ENCODE measurements at regions of chr1 and their contacts with region 1.

Region 1: DNA sequence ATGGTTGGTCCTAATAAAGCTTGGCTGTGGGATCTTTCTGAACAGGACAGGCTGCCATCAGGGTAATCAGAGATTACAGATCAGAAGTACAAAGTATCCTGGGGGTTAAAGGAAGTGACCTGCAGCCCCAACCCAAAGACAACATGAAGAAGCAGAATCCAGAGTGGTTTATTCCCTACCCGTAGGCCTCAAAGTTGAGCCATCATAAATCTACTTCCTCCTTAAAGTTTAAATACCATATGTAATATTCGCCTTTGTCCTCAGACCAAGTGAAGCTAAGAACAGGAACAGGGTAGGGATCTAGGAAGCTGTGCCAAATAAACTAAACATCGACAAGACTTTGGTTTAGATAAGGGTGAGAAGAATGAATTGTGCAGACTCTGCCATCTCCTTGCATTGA is 15.9 kb upstream of the DHX9 start:
- DNase-seq: no peak
- H3K4me3 Mint-ChIP-seq: no peak overlapping the region
- H3K27ac Mint-ChIP-seq: no peak overlapping the region
- H3K4me1 Mint-ChIP-seq: no peaks in the 10 kb centered on the region
- H3K27me3 Mint-ChIP-seq: no peaks in the 10 kb centered on the region
- CTCF ChIP-seq: no peak

Region 2: DNA sequence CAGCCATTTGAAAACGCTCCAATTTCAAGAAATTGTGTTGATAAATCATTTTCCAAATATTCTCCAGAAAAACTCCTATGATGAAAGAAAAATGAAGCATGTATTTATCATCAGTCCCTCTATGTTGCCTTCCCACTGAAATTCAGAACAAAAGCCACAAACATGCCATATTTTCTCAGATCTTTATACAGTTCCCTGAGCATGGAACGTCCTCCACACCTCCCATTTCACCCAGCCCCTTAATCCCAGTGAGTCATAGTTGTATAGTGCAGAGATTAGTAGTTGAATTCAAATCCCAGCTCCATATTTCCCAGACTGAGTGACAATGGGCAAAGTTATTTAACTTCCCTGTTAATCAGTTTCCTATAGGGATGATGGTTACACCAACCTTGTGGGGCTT is 54.3 kb before region 1 on chr1:
- CTCF ChIA-PET with region 1: no interaction called
- POLR2A ChIA-PET with region 1: no interaction called
- intact Hi-C with region 1: no loop called
- DNase-seq: peak; percentile 63
- H3K4me3 Mint-ChIP-seq: no peak overlapping the region
- H3K27ac Mint-ChIP-seq: no peak overlapping the region
- H3K4me1 Mint-ChIP-seq: peaks cover 10% of the 10 kb centered on the region
- H3K27me3 Mint-ChIP-seq: no peaks in the 10 kb centered on the region
- CTCF ChIP-seq: no peak

Region 3: DNA sequence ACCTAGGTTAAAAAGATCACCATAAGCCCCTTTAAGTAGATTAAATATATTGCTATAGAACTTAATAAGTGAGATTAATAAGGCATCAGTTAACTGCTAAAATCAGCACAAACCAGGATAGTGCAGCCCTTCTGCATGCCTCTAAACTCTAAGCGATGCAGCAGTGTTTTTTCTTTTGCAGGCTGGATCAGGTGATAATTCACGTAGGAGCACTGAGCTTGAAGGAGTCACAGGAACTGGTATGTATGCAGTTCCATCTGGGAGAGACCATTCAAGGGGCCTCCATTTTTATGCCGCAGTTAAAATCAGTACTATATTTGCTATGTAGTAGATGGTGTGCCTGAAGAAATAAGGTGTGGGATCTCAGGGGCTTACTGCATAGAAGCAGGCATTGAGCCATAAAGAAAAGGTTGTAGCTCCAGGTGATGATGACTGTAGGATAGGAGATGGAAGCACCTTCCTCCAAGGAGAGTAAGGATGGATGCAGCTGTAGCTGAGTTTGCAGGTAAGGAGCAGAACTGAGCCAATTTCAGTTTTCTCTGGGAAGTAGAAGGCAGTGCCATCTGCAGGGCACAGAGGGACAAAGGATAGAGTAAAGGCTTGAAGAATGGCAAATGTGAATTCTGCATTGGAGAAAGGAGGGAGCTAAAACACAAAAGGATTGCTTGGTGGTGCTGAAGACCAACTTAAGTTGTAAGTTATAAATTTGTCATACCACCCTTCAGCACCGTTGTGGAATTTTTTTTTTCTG is 11.1 kb before region 1 on chr1:
- CTCF ChIA-PET with region 1: interaction called, 10 read pairs
- POLR2A ChIA-PET with region 1: interaction called, 4 read pairs
- intact Hi-C with region 1: no loop called
- DNase-seq: peak; percentile 19
- H3K4me3 Mint-ChIP-seq: no peak overlapping the region
- H3K27ac Mint-ChIP-seq: no peak overlapping the region
- H3K4me1 Mint-ChIP-seq: peaks cover 6% of the 10 kb centered on the region
- H3K27me3 Mint-ChIP-seq: no peaks in the 10 kb centered on the region
- CTCF ChIP-seq: no peak

Region 4: GRCh38 chr1:182974506-182975191 is 151.4 kb after region 1 on chr1:
- CTCF ChIA-PET with region 1: no interaction called
- POLR2A ChIA-PET with region 1: no interaction called
- intact Hi-C with region 1: no loop called
- DNase-seq: no peak
- H3K4me3 Mint-ChIP-seq: no peak overlapping the region
- H3K27ac Mint-ChIP-seq: no peak overlapping the region
- H3K4me1 Mint-ChIP-seq: peaks cover 7% of the 10 kb centered on the region
- H3K27me3 Mint-ChIP-seq: no peaks in the 10 kb centered on the region
- CTCF ChIP-seq: no peak

Measured in MCF 10A (cell line).